CD4-positive, alpha-beta T cell (primary cell): ENCODE measurements at regions of chr1 and their contacts with region 1.

Region 1: GRCh38 chr1:211352985-211353515 is 26.4 kb downstream of the TRAF5 start:
- DNase-seq: peak in 13 of 14 experiments; percentile 32 to 87 (median 56)
- ATAC-seq: peak; percentile 85
- H3K4me3 ChIP-seq: peak overlapping the region; percentile 28
- H3K4me3 Mint-ChIP-seq: peak overlapping the region; percentile 86
- H3K27ac ChIP-seq: peak overlapping the region; percentile 11 to 15
- H3K27ac Mint-ChIP-seq: peak overlapping the region; percentile 87
- H3K4me1 ChIP-seq: peaks cover 52% of the 10 kb centered on the region
- H3K4me1 Mint-ChIP-seq: peaks cover 71% of the 10 kb centered on the region
- H3K27me3 ChIP-seq: no peaks in the 10 kb centered on the region
- H3K27me3 Mint-ChIP-seq: no peaks in the 10 kb centered on the region
- CTCF ChIP-seq: peak; percentile 58

Region 2: GRCh38 chr1:209839875-209840491 is 1513.1 kb before region 1 on chr1:
- CTCF ChIA-PET with region 1: no interaction called
- POLR2A ChIA-PET with region 1: no interaction called
- intact Hi-C with region 1: loop called in 1 of 2 experiments (anchors 5 kb)
- DNase-seq: no peak
- ATAC-seq: no peak
- H3K4me3 ChIP-seq: no peak overlapping the region
- H3K4me3 Mint-ChIP-seq: no peak overlapping the region
- H3K27ac ChIP-seq: no peak overlapping the region
- H3K27ac Mint-ChIP-seq: no peak overlapping the region
- H3K4me1 ChIP-seq: no peaks in the 10 kb centered on the region
- H3K4me1 Mint-ChIP-seq: peaks cover 28% of the 10 kb centered on the region
- H3K27me3 ChIP-seq: no peaks in the 10 kb centered on the region
- H3K27me3 Mint-ChIP-seq: no peaks in the 10 kb centered on the region
- CTCF ChIP-seq: no peak

Region 3: GRCh38 chr1:211382714-211383480 is 29.8 kb after region 1 on chr1:
- CTCF ChIA-PET with region 1: no interaction called
- POLR2A ChIA-PET with region 1: no interaction called
- intact Hi-C with region 1: no loop called
- DNase-seq: peak; percentile 55 to 88 (median 73)
- ATAC-seq: peak; percentile 82
- H3K4me3 ChIP-seq: peak overlapping the region; percentile 92
- H3K4me3 Mint-ChIP-seq: peak overlapping the region; percentile 85
- H3K27ac ChIP-seq: peak overlapping the region; percentile 75 to 94
- H3K27ac Mint-ChIP-seq: peak overlapping the region; percentile 86
- H3K4me1 ChIP-seq: peaks cover 8% of the 10 kb centered on the region
- H3K4me1 Mint-ChIP-seq: peaks cover 35% of the 10 kb centered on the region
- H3K27me3 ChIP-seq: no peaks in the 10 kb centered on the region
- H3K27me3 Mint-ChIP-seq: no peaks in the 10 kb centered on the region
- CTCF ChIP-seq: no peak

Region 4: GRCh38 chr1:211415700-211416099 is 62.6 kb after region 1 on chr1:
- CTCF ChIA-PET with region 1: no interaction called
- POLR2A ChIA-PET with region 1: no interaction called
- intact Hi-C with region 1: no loop called
- DNase-seq: no peak
- ATAC-seq: no peak
- H3K4me3 ChIP-seq: no peak overlapping the region
- H3K4me3 Mint-ChIP-seq: peak overlapping the region; percentile 76
- H3K27ac ChIP-seq: no peak overlapping the region
- H3K27ac Mint-ChIP-seq: peak overlapping the region; percentile 43
- H3K4me1 ChIP-seq: peaks cover 3% of the 10 kb centered on the region
- H3K4me1 Mint-ChIP-seq: peaks cover 15% of the 10 kb centered on the region
- H3K27me3 ChIP-seq: no peaks in the 10 kb centered on the region
- H3K27me3 Mint-ChIP-seq: no peaks in the 10 kb centered on the region
- CTCF ChIP-seq: no peak